Cardiac septum (tissue), 1 donor: ENCODE measurements at regions of chr11 and their contacts with region 1.

Region 1: DNA sequence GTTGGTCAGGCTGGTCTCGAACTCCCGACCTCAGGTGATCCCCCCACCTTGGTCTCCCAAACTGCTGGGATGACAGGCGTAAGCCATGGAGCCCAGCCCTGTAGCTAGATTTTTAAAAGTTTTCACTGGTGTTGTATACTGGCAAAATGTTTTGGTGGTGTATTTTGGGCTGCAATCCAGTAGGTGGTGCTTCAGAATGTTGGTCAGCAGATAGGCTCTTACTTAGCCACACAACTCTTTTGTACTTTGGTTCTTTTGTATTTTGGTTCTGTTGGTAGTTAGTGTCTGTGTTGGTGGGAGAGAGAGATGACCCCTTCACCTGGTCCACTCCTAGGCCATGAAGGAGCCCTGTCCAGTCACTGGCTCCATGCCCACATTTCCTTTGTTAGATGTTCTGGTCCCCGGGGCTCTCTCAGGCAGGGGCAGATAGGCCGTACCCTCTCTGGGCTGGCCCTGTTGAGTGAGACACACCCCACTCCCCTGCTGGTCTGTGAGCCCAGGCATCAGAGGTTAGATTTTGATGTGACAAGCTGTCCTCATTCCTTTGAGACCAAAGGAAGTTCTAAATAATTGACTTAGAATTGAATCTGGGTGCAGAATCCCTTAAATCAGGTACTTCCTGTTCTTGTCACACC is 123.8 kb downstream of the DDX10 start:
- DNase-seq: no peak

Region 2: DNA sequence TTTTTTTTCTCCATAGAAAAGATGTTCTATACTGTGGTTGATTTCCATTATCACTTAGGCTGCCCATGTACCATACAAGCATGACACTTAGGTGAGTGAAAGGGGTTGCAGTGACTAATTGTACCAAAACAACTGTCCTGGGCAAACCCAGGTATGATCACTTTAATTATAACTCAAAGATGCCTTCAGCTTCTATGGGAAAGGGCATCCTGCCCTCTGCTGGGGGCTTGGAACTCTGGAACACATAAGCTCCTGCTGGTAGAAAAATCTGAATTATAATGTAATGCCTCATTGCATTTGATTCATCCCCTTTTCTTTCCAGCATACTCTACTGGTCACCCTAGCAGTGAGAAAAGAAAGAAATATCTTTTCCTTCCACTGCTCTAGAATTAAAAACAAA is 82.5 kb after region 1 on chr11:
- intact Hi-C with region 1: loop called (anchors 5 kb)
- DNase-seq: no peak

Region 3: DNA sequence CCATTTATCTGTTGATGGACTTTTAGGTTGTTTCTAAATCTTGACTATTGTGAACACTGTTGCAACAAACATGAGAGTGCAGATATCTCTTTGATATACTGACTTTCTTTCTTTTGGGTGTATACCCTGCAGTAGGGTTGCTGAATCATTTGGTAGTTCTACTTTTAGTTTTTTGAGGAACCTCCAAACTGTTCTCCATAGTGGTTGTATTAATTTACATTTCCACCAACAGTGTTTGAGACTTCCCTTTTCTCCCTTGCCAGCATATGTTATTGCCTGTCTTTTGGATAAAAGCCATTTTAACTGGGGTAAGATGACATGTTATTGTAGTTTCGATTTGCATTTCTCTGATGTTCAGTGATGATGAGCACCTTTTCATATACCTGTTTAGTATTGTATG is 206.2 kb after region 1 on chr11:
- intact Hi-C with region 1: no loop called
- DNase-seq: no peak

Region 4: GRCh38 chr11:109247071-109247470 is 458.4 kb after region 1 on chr11:
- intact Hi-C with region 1: no loop called
- DNase-seq: no peak